B cell (primary cell): ENCODE measurements at regions of chr5 and their contacts with region 1.

Region 1: DNA sequence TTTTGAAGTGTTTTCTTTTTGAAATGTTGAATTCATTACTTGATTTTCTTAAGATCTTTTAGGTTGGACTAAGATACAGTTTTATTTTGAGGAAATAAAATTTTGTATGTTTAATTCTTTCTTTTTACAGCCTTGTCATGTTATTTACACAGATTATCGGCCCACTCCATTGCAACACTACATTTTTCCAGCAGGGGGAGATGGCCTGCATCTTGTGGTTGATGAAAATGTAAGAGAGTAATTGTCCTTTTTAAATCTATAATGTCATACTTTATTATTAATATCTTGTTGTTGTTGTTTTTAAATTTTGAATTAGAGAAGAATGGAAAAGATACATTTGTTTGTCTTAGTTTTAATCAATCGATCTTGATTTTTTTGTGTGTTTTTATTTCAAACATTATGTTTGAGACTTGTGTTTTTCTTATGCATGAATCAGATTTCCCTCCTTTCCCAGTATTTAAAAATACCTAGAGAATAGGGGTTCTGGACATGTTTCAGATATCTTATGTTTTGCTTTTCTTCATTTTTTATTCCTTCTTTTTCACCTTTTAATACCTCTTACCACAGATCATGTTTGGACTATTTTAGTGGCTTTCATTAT is 36.7 kb downstream of the MTREX start:
- DNase-seq: peak; percentile 67
- ATAC-seq: peak; percentile 47
- H3K4me3 ChIP-seq: no peak overlapping the region
- H3K4me3 Mint-ChIP-seq: no peak overlapping the region
- H3K27ac ChIP-seq: peak overlapping the region in 1 of 2 donors; percentile 52
- H3K27ac Mint-ChIP-seq: no peak overlapping the region
- H3K4me1 ChIP-seq: no peaks in the 10 kb centered on the region
- H3K4me1 Mint-ChIP-seq: no peaks in the 10 kb centered on the region
- H3K27me3 ChIP-seq: no peaks in the 10 kb centered on the region
- H3K27me3 Mint-ChIP-seq: no peaks in the 10 kb centered on the region
- CTCF ChIP-seq: peak; percentile 99

Region 2: DNA sequence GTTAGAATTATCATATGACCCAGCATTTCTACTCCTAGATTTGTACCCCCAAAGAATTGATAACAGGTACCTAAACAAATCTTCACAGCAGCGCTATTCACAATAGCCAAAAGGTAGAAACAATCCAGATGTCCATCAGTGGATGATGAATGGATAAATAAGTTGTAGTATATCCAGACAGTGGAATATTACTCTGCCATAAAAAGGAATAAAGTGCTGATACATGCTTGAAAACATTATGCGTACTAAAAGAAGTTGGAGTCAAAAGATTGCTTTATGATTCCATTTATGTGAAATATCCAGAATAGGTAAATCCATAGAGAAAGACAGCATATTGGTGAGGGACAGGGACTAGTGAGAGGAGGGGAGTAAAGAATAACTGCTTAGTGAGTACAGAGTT is 10.7 kb before region 1 on chr5:
- CTCF ChIA-PET with region 1: no interaction called
- POLR2A ChIA-PET with region 1: no interaction called
- intact Hi-C with region 1: loop called (anchors 1 kb)
- DNase-seq: no peak
- ATAC-seq: no peak
- H3K4me3 ChIP-seq: no peak overlapping the region
- H3K4me3 Mint-ChIP-seq: no peak overlapping the region
- H3K27ac ChIP-seq: no peak overlapping the region
- H3K27ac Mint-ChIP-seq: no peak overlapping the region
- H3K4me1 ChIP-seq: peaks cover 3 to 7% of the 10 kb centered on the region in 2 donors
- H3K4me1 Mint-ChIP-seq: peaks cover 21% of the 10 kb centered on the region
- H3K27me3 ChIP-seq: no peaks in the 10 kb centered on the region
- H3K27me3 Mint-ChIP-seq: no peaks in the 10 kb centered on the region
- CTCF ChIP-seq: no peak